Calu3 (cell line): ENCODE measurements at regions of chr9 and their contacts with region 1.

Region 1: DNA sequence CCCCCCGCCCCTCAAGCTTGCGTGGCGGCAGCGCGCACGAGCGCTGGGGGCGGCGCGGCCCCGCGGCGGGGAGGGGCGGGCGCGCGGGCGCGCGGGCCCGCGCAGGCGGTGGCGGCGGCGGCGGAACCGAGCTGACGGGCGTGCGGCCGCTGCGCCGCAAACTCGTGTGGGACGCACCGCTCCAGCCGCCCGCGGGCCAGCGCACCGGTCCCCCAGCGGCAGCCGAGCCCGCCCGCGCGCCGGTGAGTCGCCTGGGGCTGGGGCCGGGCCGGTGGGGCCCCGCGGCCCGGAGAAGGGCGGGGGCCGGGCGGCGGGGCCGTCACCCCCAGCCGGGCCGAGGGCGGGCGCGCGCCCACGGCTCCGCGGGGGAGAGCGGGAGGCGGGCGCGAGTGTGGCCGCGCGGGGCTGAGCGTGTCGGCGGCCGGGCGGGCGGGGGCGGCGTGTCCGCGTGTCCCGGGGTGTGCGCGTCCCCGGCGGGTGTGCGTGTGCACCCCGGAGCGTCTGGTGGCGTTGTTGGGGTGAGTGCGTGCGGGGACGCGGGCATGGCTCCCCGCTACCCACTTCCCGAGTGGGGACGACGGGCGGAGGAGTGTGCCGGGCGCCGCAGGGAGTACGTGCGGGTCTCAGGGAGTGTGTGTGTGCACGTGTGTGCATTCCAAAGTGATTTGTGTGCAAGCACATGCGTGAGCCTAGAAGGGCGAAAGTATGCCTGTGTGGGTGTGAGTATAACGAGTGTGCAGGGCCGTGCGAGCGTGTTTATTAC is at the start of gene NEK6:
- DNase-seq: no peak
- H3K4me3 Mint-ChIP-seq: peak within 1 kb of the TSS; percentile 92
- H3K27ac Mint-ChIP-seq: peak within 1 kb of the TSS; percentile 82
- H3K4me1 Mint-ChIP-seq: peaks cover 32% of the 10 kb centered on the region
- H3K27me3 Mint-ChIP-seq: no peaks in the 10 kb centered on the region
- CTCF ChIP-seq: no peak
- total RNA-seq, gene NEK6: 42.2 and 43.0 TPM in 2 replicates

Region 2: DNA sequence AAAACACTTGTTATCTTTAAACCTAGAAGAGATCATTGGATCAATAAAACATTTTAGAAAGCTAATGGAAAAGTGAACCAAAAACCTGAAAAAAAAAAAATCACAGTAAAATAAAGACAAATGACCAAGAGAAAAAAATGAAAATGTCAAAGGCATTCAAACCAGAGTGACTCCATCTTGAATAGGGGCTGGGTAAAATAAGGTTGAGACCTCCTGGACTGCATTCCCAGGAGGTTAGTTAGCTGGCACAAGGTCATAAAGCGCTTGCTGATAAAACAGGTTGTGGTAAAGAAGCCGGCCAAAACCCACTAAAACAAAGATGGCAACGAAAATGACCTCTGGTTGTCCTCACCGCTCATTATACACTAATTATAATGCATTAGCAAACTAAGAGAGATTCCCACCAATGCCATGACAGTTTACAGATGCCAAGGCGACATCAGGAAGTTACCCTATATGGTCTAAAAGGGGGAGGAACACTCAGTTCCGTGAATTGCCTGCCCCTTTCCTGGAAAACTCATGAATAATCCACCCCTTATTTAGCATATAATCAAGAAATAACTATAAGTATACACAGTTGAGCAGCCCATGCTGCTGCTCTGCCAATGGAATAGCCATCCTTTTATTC is 117.0 kb before region 1 on chr9:
- CTCF ChIA-PET with region 1: no interaction called
- intact Hi-C with region 1: loop called (anchors 5 kb)
- DNase-seq: no peak
- H3K4me3 Mint-ChIP-seq: no peak overlapping the region
- H3K27ac Mint-ChIP-seq: no peak overlapping the region
- H3K4me1 Mint-ChIP-seq: peaks cover 23% of the 10 kb centered on the region
- H3K27me3 Mint-ChIP-seq: no peaks in the 10 kb centered on the region
- CTCF ChIP-seq: no peak

Region 3: DNA sequence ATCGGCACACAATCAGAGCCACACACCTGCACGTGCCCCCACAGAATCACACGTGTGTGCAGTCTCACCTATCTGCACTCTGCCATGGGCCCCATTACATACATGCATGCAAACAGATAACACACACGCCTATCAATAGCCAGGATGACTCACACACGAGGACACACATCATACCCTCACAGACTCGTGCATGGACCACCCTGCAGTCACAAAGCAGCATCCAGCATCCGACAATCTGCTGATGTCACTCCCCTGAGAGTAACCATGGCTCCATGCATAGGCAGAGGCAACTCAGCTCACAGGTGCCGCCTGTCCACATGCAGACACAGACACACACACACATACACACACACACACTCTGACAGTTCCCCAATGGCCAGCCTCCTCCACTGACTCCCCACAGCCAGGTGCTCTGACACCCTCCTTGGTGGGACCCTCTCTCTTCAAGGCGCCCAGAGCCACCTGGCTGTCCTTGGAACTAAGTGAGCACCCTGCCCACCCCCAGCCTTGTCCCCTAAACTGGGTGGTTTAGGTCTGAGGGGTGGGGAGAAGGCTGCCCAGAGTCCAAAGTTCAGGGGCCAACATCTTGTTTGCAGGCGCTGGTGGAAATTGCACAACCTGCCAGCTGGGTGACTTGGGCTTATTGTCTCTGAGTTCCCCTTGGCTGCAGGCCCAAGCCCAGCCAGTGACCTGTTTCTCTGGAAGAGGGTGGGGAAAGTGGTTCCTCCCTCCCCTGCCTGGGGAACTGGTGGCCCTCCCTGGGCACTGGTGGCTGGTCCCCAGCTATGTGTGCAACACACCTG is 34.9 kb before region 1 on chr9:
- CTCF ChIA-PET with region 1: no interaction called
- intact Hi-C with region 1: loop called (anchors 1 kb)
- DNase-seq: peak; percentile 86
- H3K4me3 Mint-ChIP-seq: peak overlapping the region; percentile 58
- H3K27ac Mint-ChIP-seq: peak overlapping the region; percentile 68
- H3K4me1 Mint-ChIP-seq: peaks cover 51% of the 10 kb centered on the region
- H3K27me3 Mint-ChIP-seq: no peaks in the 10 kb centered on the region
- CTCF ChIP-seq: no peak

Region 4: GRCh38 chr9:124239249-124240073 is 18.6 kb before region 1 on chr9:
- CTCF ChIA-PET with region 1: no interaction called
- intact Hi-C with region 1: no loop called
- DNase-seq: no peak
- H3K4me3 Mint-ChIP-seq: no peak overlapping the region
- H3K27ac Mint-ChIP-seq: no peak overlapping the region
- H3K4me1 Mint-ChIP-seq: no peaks in the 10 kb centered on the region
- H3K27me3 Mint-ChIP-seq: no peaks in the 10 kb centered on the region
- CTCF ChIP-seq: no peak

Region 5: GRCh38 chr9:124342776-124343485 is 84.9 kb after region 1 on chr9:
- CTCF ChIA-PET with region 1: no interaction called
- intact Hi-C with region 1: no loop called
- DNase-seq: no peak
- H3K4me3 Mint-ChIP-seq: no peak overlapping the region
- H3K27ac Mint-ChIP-seq: no peak overlapping the region
- H3K4me1 Mint-ChIP-seq: no peaks in the 10 kb centered on the region
- H3K27me3 Mint-ChIP-seq: no peaks in the 10 kb centered on the region
- CTCF ChIP-seq: no peak